Calu3 (cell line): ENCODE measurements at regions of chr12 and their contacts with region 1.

Region 1: DNA sequence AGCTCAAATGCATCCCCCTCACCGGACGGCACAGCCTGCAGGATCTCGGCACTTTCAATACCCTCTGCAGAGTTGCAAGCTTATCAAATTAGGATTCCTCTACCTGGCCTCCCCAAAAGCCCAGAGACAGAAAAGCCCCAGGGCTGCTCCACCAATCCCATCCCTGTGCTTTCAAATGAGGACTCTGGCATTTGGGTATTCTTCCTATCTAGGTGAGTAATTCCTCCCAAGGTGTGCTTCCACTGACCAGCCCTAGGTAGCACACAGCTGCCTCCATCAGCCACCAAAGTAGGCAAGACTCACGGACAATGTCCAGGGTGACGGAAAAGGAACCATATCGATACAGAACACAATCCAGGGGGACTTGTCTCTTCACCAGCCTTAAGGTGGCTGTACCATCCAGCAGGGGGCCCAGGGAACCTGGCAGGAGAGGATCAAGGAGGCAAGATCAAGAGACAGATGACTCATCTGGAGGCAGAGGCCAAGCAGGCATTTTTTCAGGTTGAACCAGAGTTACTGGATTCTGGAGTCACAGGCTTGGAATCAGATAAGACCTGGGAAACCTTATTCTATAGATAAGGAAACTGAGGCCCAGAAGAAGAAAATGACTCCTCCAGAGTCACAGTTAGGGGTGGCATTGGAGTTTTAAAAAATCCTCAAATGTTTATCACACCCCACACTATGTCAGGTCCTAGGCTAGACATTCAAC is 9.9 kb downstream of the PMEL start:
- DNase-seq: peak; percentile 90
- H3K4me3 Mint-ChIP-seq: no peak overlapping the region
- H3K27ac Mint-ChIP-seq: peak overlapping the region; percentile 79
- H3K4me1 Mint-ChIP-seq: peaks cover 31% of the 10 kb centered on the region
- H3K27me3 Mint-ChIP-seq: no peaks in the 10 kb centered on the region
- CTCF ChIP-seq: peak; percentile 69

Region 2: DNA sequence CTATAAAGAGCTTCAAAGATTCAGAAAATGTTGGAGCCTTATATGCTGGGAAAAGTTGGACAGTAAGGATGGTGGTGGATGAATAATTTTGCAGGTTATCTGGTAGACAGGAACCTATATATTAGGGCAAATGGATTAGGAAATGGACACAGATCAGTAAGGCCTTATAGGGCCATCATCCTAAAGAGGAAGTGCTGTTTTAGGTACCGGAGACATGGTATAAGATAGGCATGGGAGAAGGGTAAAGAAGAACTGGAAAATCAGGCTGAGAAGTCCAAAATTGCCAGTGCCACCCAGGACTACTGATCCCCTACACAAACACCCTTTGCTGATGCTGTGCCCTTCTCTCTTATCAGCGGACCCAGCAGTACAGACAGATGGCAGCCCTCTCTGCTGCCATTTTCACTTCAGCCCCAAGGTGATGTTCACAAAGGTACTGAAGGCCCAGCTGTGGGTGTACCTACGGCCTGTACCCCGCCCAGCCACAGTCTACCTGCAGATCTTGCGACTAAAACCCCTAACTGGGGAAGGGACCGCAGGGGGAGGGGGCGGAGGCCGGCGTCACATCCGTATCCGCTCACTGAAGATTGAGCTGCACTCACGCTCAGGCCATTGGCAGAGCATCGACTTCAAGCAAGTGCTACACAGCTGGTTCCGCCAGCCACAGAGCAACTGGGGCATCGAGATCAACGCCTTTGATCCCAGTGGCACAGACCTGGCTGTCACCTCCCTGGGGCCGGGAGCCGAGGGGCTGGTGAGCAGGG is 207.5 kb before region 1 on chr12:
- CTCF ChIA-PET with region 1: no interaction called
- intact Hi-C with region 1: no loop called
- DNase-seq: no peak
- H3K4me3 Mint-ChIP-seq: no peak overlapping the region
- H3K27ac Mint-ChIP-seq: peak overlapping the region; percentile 1
- H3K4me1 Mint-ChIP-seq: peaks cover 10% of the 10 kb centered on the region
- H3K27me3 Mint-ChIP-seq: peaks cover 14% of the 10 kb centered on the region
- CTCF ChIP-seq: no peak

Region 3: DNA sequence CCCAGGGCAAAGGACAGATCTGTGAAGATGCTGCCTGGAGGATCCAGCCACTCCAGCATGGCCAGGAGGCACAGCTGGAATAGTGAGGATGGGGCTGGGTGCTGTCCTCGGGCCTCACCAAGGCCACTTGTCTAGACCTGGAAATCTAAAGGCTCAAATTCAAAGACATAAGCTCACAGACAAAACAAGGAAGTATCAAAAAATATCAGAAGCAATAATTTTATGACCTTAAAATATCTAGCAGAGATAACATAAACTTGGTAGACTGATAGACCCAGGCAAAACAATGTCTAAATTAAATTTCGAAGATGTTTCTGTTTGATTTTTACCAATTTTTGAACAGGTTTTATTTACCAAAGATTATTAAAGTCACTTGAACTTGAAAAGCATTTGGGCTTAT is 90.6 kb before region 1 on chr12:
- CTCF ChIA-PET with region 1: no interaction called
- intact Hi-C with region 1: no loop called
- DNase-seq: no peak
- H3K4me3 Mint-ChIP-seq: no peak overlapping the region
- H3K27ac Mint-ChIP-seq: no peak overlapping the region
- H3K4me1 Mint-ChIP-seq: no peaks in the 10 kb centered on the region
- H3K27me3 Mint-ChIP-seq: no peaks in the 10 kb centered on the region
- CTCF ChIP-seq: no peak

Region 4: DNA sequence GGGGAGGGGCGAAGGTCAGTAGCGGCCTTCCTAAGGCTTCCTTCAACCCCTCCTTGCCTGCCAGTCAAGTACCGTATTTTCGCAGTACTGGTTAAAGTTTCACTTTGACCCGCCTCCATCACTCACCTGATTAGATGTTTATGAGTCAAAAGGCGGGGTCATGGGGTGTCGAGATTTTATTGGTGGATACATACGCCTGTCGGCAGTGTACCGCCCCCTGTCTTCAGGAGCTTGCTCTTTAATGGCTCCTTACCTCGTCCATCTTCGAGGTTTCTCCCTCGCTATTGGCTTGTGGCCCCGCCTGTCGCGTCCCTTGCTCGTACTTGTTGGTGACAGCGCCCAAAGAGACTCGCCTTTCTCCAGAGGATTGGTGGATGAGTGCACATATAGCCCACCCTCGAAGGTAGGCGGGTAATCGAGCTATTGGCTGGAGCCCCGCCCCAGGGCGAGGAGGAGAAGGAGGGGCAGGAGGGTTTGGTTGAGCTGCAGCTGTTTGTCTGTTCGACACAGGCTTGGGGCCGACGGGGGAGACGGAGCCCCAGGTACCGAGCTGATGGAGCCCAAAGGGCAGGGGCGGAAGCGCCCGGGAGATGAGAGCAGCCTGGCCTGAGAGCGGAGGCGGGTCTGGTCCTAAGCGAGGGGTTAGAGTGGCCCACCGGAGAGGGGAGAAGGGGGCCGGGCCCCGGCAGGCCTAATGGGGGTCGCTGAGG is 17.8 kb after region 1 on chr12 and contains the start of gene RAB5B:
- CTCF ChIA-PET with region 1: interaction called, 14 read pairs
- intact Hi-C with region 1: no loop called
- DNase-seq: peak; percentile 99
- H3K4me3 Mint-ChIP-seq: no peak within 1 kb of the TSS
- H3K27ac Mint-ChIP-seq: no peak within 1 kb of the TSS
- H3K4me1 Mint-ChIP-seq: peaks cover 15% of the 10 kb centered on the region
- H3K27me3 Mint-ChIP-seq: no peaks in the 10 kb centered on the region
- CTCF ChIP-seq: peak; percentile 14
- total RNA-seq, gene RAB5B: 84.7 and 91.6 TPM in 2 replicates